ENCODE measurements at regions of chr5 and their contacts with region 1.

Region 1: GRCh38 chr5:77143998-77144836 is 57.1 kb upstream of the ZBED3 start:
- DNase-seq: peak; percentile 57
- CTCF ChIP-seq: peak; percentile 79

Region 2: DNA sequence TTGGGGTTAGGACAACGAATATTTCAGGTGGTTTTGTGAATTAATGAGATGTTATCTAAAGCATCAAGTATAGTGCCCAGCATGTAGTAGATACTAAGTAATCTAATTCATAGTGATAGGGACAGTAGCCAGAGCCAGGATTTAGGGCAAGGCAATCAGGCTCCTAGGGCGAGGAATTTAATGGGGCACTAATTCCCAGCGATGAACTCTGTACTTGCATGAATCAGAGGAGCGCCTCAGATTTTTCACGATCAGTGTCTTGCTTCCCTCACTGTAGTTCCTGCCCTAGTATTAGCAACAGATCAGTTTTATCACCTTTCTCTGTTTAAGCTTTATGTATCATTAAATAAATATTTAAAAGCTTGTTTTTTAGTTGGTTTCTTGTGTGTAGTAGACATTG is 110.9 kb before region 1 on chr5:
- CTCF ChIA-PET with region 1: no interaction called
- POLR2A ChIA-PET with region 1: no interaction called
- DNase-seq: no peak
- CTCF ChIP-seq: no peak

Region 3: GRCh38 chr5:77133061-77133758 is 11.0 kb before region 1 on chr5:
- CTCF ChIA-PET with region 1: interaction called, 11 read pairs
- POLR2A ChIA-PET with region 1: no interaction called
- DNase-seq: no peak
- CTCF ChIP-seq: no peak

Region 4: GRCh38 chr5:77155179-77155785 is 11.1 kb after region 1 on chr5:
- CTCF ChIA-PET with region 1: interaction called, 16 read pairs
- POLR2A ChIA-PET with region 1: no interaction called
- DNase-seq: no peak
- CTCF ChIP-seq: no peak

Region 5: DNA sequence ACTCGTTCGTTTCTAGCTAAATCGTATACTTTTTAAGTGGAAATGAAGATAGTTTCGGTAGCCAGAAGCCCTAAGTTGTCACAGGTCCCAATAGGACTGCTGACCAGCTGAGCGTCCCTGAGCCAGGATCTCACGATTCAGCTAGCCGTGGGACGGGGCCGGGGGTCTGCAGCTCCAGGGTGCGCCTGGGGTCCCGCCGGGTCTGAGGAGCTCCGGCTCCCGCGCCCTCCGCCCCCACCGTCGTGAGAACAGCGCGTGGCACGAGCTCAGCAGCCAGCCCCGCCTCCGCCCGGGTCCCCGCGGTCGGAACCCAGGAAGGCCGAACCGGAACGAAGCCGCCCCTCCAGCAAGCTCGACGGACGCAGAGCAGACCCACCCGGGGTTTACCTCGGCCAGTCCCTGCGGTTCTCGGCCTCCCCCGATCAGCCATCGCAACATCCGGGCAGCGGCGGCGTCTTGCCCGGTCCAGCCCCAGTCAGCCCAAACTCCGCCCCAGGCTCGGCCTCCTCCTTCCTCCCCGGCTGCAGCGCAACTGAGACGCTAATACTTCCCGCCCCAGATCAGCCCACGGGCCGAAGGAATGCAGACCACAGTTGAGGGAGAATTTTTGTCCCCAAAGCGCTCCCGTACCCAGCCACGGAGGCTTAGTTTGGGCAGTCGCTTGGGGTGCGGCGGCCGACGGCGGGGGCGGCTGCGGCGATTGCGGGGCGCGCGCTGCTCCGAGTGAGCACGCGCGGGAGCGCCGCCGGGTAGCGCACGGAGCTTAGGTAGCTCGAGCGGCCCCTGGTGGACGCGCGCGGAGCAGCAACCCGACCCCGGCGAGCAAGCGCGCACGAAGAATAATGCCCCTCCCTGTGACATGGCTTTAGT is 347.8 kb after region 1 on chr5 and contains the start of gene WDR41:
- CTCF ChIA-PET with region 1: interaction called, 38 read pairs
- POLR2A ChIA-PET with region 1: no interaction called
- DNase-seq: peak; percentile 90
- CTCF ChIP-seq: peak; percentile 94